ENCODE measurements at regions of chr17 and their contacts with region 1.

Region 1: DNA sequence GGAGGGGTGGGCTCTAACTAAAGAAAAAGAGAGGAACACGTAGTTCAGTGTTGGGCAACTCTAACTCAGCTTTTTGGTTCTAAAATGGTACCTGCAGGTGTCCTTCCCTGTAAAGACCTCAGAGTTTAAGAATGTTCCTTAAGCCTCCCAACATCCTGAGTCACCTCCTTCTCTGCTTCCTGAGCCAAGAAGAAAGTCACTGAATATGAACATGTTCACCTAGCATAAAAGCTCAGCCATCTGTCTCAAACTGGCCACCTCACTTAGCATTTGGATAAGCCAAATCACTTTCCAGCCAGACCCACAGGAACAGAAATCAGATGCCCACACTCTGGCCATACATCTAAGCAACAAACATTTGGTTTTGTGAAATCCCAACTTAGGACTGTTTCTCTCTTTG is 3.7 kb downstream of the TMEM98 start:
- DNase-seq: peak; percentile 55
- ATAC-seq: no peak
- H3K4me3 ChIP-seq: no peak overlapping the region
- H3K27ac ChIP-seq: no peak overlapping the region
- H3K4me1 ChIP-seq: peaks cover 31% of the 10 kb centered on the region
- H3K27me3 ChIP-seq: no peaks in the 10 kb centered on the region
- CTCF ChIP-seq: no peak

Region 2: GRCh38 chr17:32909787-32910369 is 21.8 kb before region 1 on chr17:
- CTCF ChIA-PET with region 1: interaction called, 3 read pairs
- POLR2A ChIA-PET with region 1: no interaction called
- intact Hi-C with region 1: loop called (anchors 1 kb)
- DNase-seq: peak; percentile 74
- ATAC-seq: peak; percentile 54
- H3K4me3 ChIP-seq: no peak overlapping the region
- H3K27ac ChIP-seq: no peak overlapping the region
- H3K4me1 ChIP-seq: peaks cover 12% of the 10 kb centered on the region
- H3K27me3 ChIP-seq: no peaks in the 10 kb centered on the region
- CTCF ChIP-seq: peak; percentile 66

Region 3: GRCh38 chr17:33012522-33013033 is 80.9 kb after region 1 on chr17:
- CTCF ChIA-PET with region 1: no interaction called
- POLR2A ChIA-PET with region 1: no interaction called
- intact Hi-C with region 1: no loop called
- DNase-seq: peak; percentile 85
- ATAC-seq: peak; percentile 70
- H3K4me3 ChIP-seq: no peak overlapping the region
- H3K27ac ChIP-seq: no peak overlapping the region
- H3K4me1 ChIP-seq: peaks cover 10% of the 10 kb centered on the region
- H3K27me3 ChIP-seq: no peaks in the 10 kb centered on the region
- CTCF ChIP-seq: no peak